Right ventricle myocardium inferior (tissue), 1 donor: ENCODE measurements at regions of chr7 and their contacts with region 1.

Region 1: GRCh38 chr7:29921404-29922010 is 68.1 kb downstream of the SCRN1 start:
- DNase-seq: no peak
- ATAC-seq: peak; percentile 87

Region 2: DNA sequence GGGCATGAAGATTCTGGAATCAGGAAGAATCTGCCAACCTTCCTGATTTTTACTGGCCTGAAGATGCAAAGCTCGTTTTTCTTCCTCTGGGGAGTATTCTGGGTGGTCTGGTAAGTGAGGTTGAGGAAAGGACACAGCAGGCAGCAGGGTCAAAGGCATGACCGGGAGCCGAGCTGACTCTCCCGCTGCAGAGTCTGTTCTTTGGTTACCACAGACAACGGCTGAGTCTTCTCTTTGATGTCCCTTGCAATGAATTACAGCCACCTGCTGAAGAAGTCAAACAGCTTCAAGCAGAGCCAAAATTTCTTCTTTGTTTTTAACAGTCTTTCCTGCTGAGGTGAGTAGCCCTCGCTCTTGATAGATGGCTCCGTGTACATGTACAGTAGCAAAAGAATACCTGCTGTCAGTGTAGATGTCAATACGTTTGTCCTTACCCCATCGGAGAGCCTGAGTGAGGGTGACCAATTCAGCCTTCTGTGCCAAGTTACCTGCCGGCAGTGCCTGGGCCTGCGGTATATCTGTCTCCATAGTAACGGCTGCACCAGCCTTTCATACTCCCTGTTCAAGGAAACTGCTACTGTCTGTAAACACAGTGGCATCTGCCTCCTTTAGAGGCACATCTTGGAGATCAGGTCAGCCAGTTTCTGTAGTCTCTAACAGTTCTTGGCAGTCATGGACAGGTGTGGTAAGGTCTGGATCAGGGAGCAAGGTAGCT is 281.5 kb before region 1 on chr7:
- intact Hi-C with region 1: loop called (anchors 5 kb)
- DNase-seq: no peak
- ATAC-seq: no peak

Region 3: DNA sequence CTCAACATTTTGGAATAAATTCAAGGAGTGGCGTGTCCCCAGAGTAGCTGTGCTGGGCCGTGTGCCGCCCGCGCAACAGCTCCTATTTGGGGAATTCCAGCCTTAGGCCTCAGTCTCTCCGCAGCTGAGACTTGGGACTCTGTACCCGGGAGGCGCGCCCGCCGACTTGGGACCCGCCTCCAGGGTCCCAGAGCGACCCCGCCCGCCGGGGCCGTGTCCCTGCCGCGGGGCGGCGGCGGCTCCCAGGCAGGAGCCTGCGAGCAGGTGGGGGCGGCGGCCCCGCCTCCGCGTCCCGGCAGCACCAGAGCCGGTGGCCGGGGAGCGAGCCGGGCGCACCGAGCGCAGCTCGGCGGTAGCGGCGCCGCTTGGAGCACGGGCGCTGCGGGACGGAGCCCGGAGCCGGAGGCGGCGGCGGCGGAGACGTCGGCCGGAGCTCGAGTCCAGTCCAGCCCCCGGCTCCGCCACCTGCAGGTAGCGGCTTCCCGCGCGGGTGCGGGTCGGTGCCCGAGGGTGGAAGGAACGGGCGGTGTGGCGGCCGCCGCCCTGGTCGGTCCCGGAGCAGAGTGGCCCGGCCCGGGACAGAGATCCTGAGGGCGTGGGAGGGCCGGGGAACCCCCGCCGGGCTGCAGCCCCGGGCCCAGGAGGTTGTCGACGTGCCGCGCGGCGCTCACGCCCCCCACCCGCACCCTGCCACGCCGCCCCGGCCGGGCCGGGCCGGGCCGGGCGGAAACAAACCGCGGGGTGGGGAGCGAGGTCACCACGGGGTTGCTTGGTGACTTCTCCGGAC is 115.1 kb before region 1 on chr7 and contains the start of gene WIPF3:
- intact Hi-C with region 1: loop called (anchors 5 kb)
- DNase-seq: no peak
- ATAC-seq: peak; percentile 69
- total RNA-seq, gene WIPF3: 5.5 TPM

Region 4: GRCh38 chr7:29878081-29878688 is 43.3 kb before region 1 on chr7:
- intact Hi-C with region 1: no loop called
- DNase-seq: no peak
- ATAC-seq: no peak

Region 5: DNA sequence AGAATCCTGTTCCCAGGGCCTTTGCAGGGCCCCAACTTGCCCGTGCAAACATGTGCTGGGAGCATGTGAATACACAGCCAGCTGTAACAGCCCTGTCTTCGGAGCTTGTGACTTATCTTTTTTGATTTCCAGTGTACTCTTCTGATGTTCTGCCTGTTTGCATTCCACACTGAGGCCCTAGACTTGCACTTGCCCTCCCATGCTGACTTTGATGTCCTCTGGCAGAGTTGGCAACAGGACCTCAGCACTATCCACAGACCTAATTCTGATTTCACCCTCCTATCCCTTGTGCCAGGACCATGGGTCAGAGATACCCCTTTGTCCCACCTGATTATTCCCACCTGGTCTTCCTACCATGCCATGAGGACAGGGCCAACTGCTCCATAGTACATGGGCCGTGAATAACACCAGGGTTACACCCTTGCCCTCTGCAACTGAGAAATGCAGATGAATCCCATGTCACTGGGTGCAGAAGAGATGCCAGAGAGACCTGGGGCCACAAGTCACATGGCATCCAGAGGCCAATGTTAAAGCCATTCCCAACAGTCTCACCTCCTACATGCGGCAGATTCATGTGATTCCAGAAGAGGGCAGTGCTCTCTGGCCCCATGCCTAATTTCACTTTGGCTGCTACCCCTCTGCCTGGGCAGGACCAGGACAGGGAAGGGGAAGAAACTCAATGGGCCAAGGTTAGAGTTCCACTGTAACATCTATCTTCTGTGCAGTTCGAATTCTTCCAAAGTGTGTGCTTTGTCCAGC is 25.1 kb after region 1 on chr7:
- intact Hi-C with region 1: no loop called
- DNase-seq: no peak
- ATAC-seq: peak; percentile 62